ENCODE measurements at regions of chr2 and their contacts with region 1.

Region 1: DNA sequence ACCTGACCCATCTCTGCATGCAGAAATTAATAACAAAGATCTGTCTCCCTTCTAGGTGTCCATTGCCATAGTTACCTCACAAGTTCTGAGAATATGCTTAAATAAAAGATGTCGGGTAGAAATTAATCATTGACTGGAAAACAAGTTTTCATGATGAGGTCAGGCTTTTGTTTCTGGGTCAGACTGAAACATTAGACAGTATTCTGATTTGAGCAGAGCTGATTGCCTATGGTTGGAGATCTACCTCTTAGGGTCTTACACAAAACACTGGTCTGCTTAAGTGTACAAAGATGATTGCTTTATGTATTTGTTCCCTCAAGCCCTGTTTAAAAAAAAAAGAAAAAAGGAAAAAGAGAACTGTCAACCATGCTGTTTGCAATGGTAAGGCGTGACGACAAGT is 956.4 kb downstream of the CPS1 start:
- DNase-seq: no peak
- ATAC-seq: no peak
- H3K4me3 ChIP-seq: no peak overlapping the region
- H3K27ac ChIP-seq: no peak overlapping the region
- H3K4me1 ChIP-seq: no peaks in the 10 kb centered on the region
- H3K27me3 ChIP-seq: no peaks in the 10 kb centered on the region
- CTCF ChIP-seq: no peak

Region 2: GRCh38 chr2:210626849-210627248 is 886.0 kb before region 1 on chr2:
- intact Hi-C with region 1: loop called in 1 of 10 experiments (anchors 10 kb)
- DNase-seq: no peak
- ATAC-seq: no peak
- H3K4me3 ChIP-seq: no peak overlapping the region
- H3K27ac ChIP-seq: no peak overlapping the region
- H3K4me1 ChIP-seq: no peaks in the 10 kb centered on the region
- H3K27me3 ChIP-seq: no peaks in the 10 kb centered on the region
- CTCF ChIP-seq: no peak

Region 3: DNA sequence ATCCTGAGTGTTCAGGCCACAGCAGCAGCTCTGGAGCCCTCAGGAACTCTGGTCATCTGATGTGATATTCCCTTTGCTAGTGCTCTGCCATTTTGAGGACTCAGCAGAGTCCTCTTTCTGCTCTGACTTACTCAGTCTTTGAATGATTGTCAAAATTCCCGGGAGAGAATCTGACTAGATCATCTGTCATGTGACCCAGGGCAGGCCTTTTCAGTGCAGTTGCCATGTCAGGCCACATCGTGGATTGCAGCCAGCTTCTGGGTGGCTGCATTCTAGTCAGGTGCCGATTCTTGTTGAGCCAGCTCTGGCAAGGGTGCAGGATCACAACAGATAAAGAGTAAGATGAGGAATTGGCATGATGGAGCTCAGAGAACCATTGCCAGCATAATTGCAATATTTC is 160.8 kb before region 1 on chr2:
- intact Hi-C with region 1: no loop called
- DNase-seq: peak in 1 of 2 donors; percentile 8
- ATAC-seq: peak in 1 of 8 donors; percentile 11
- H3K4me3 ChIP-seq: no peak overlapping the region
- H3K27ac ChIP-seq: no peak overlapping the region
- H3K4me1 ChIP-seq: no peaks in the 10 kb centered on the region
- H3K27me3 ChIP-seq: no peaks in the 10 kb centered on the region
- CTCF ChIP-seq: no peak

Measured in heart right ventricle (tissue), 16 donors.